H1 (cell line): ENCODE measurements at regions of chr15 and their contacts with region 1.

Region 1: GRCh38 chr15:25670025-25670554 is 193.0 kb downstream of the ATP10A start:
- DNase-seq: peak; percentile 61 to 67
- H3K4me3 ChIP-seq: peak overlapping the region in 3 of 4 experiments; percentile 28 to 46 (median 30); a peak in 5 of 8 replicates
- H3K27ac ChIP-seq: peak overlapping the region; percentile 18; the same call in 1 of the 2 replicates
- H3K4me1 ChIP-seq: peaks cover 8 to 24% (median 16%) of the 10 kb centered on the region in 4 experiments
- H3K27me3 ChIP-seq: no peaks in the 10 kb centered on the region
- CTCF ChIP-seq: no peak
- EP300 ChIP-seq: peak in 1 of 2 experiments; percentile 31; a peak in 1 of 3 replicates
- POLR2A ChIP-seq: no peak
- RAD21 ChIP-seq: no peak; a peak in 1 of 4 replicates

Region 2: DNA sequence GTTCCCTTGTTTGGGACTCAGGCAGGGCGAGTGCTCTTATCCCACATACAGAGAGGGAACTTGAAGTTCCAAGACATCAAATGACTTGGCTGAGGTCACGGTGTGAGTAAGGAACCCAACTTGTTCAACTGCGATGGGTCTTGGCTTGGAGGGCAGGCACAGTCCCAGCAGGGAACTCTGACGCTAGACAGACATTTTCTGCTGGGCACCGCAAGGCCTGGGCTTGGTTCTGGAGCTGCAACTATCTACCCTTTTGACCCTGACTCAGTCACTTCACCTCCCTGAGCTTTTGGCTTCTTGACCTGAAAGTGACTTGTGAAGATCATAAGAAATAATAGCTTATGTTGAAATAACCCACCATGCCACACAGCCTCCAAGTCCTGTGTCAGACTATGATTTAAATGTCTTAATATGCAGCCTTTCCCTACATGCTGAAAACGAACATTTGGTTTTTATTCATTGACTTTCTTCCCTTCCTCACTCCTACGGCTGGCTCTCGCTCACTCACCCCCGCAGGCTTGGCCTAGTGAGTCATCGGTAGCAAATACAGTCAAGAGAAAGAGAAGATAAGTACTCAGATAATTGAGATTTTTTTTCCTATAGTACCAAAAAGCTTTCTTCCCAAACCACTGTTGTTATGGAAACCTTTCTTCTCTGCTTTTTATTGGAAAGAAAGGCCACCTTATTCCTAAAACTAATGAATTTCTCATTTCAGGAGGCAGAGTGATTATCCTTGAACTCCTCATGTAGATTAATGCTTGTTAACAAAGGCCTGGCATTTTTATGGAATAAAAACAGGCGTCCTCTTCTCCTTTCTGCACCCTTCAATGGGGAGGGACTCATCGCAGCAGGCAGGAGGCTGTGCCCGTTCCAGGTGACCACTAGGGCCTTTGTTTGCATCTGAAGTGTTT is 14.7 kb after region 1 on chr15:
- CTCF ChIA-PET with region 1: interaction called, 26 read pairs
- POLR2A ChIA-PET with region 1: no interaction called
- DNase-seq: no peak
- H3K4me3 ChIP-seq: no peak overlapping the region
- H3K27ac ChIP-seq: no peak overlapping the region
- H3K4me1 ChIP-seq: peaks cover 0 to 7% (median 0%) of the 10 kb centered on the region in 4 experiments; a peak in 3 of 7 replicates
- H3K27me3 ChIP-seq: no peaks in the 10 kb centered on the region
- CTCF ChIP-seq: peak in 1 of 3 experiments; percentile 6; a peak in 1 of 4 replicates
- EP300 ChIP-seq: no peak
- POLR2A ChIP-seq: no peak
- RAD21 ChIP-seq: no peak

Region 3: DNA sequence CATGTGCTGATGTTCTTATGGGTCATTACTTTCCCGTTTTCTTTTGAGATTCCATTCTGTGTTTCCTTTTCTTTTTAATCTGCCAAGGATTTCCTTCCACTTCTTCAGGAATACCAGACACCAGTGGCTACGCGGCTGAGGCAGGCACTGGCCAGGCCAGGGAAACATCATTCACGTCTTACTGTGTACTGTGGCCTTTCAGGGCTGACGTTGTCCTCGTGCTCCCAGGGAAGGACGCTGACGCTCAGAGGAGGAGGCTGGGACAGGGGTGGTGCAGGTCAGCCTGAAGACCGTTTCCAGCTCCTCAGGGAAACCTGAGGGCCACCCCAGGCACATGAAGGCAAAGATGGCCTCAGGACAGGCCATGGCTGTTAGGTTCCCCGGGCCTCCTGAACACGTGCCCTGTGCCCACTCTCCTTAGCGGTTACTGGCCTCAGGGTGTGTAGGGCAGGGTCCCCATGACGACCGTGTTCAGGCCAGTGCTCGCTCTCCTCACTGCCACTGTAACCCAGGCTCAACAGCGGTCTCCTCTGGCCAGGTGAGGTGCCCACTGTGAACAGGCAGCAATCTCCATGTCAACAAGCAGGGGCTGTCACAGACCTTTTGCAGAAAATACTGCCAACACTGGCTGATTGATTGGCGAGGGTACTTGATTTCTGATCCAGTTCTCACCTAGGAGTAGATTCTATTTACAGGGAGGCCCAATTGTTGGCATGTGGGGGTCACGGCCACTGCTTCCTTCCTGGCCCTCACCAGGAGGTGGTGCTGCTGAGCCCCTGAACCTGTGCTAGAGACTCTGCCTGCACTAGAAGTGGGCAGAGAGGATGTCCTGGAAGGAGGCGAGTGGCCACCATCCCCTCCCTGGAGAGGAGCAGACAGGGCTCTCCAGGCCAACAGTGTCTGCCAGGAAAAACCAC is 23.5 kb after region 1 on chr15:
- CTCF ChIA-PET with region 1: interaction called, 10 read pairs
- POLR2A ChIA-PET with region 1: interaction called, 3 read pairs
- DNase-seq: peak in 1 of 2 experiments; percentile 86
- H3K4me3 ChIP-seq: no peak overlapping the region
- H3K27ac ChIP-seq: no peak overlapping the region
- H3K4me1 ChIP-seq: peaks cover 0 to 14% (median 5%) of the 10 kb centered on the region in 4 experiments; a peak in 6 of 7 replicates
- H3K27me3 ChIP-seq: no peaks in the 10 kb centered on the region
- CTCF ChIP-seq: peak; percentile 70 to 92 (median 85)
- EP300 ChIP-seq: no peak
- POLR2A ChIP-seq: no peak
- RAD21 ChIP-seq: peak; percentile 66 to 68